HEK293 (cell line): ENCODE measurements at regions of chr1 and their contacts with region 1.

Region 1: GRCh38 chr1:34831721-34832246 is 27.8 kb downstream of the SMIM12 start:
- H3K4me3 ChIP-seq: no peak overlapping the region
- H3K27ac ChIP-seq: no peak overlapping the region
- H3K4me1 ChIP-seq: no peaks in the 10 kb centered on the region
- CTCF ChIP-seq: no peak

Region 2: DNA sequence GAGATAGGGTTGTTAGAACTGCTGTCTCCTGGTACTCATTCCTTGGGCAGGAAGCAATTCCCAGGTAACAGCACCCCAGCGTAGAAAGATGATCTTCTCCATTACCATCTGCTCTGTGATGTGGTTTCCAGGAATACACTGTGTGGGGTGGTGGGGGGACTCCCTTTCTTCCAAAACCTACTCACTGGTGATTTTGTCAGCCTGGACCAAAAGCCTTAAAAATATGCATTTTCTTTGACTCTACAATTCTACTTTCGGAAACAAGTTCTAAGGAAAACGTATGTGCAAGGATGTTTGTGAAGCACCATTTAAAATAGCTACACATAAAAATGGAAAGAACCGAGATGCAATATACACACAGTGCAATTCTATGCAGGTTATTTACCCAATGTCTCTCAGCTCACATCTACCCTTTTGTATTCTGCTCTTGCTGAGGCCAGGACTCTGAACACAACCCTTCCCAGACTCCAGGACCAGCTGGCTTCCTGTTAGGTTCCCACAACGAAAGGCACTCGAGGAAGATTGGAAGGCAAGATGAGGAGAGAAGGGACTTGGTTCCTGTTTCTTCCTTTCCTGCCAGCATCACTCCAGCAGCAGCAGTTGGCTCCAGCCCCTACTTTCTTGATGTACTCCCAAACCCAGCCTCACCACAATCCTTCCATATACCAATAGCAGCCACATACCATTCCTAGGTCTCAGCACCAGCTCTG is 110.0 kb before region 1 on chr1:
- CTCF ChIA-PET with region 1: no interaction called
- POLR2A ChIA-PET with region 1: no interaction called
- H3K4me3 ChIP-seq: no peak overlapping the region
- H3K27ac ChIP-seq: no peak overlapping the region
- H3K4me1 ChIP-seq: no peaks in the 10 kb centered on the region
- CTCF ChIP-seq: no peak

Region 3: DNA sequence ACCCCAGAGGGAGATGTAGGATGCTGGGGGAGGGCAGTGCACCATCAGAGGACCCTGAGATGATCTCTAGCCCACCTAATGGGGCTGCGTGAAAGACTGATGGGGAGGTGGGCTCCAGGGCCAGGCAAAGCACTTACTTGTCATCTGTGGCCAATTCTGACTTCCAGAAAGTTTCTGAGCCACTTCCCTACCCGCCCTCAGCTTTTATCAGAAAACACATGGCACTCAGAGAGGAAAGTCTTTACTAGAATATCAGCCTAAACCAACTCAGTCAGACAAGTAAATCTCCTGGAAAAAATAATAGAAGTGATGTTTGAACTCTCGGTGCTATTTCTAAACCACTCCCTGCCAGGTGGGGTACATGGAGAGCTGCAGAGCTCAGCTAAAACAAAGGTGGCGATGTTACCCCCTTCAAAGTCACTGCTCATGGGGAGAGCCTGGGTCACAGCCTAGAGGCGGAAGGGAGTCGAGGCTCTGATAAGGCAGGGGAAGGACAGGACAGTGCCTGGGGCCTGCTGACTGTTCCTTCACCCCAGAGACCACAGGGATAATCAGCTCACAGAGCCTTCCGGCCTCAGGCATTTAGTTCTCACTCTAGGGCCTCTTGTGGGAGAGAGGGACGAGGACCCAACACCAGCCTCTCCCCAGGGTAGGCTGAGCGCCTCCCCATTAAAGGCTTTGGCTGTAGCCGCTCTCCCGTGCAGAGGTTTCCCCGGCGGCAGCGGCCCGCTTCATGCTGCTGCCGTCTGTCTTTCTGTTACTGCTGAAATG is 13.5 kb after region 1 on chr1:
- CTCF ChIA-PET with region 1: no interaction called
- POLR2A ChIA-PET with region 1: no interaction called
- H3K4me3 ChIP-seq: no peak overlapping the region
- H3K27ac ChIP-seq: no peak overlapping the region
- H3K4me1 ChIP-seq: no peaks in the 10 kb centered on the region
- CTCF ChIP-seq: no peak

Region 4: GRCh38 chr1:34859446-34860200 is 27.8 kb after region 1 on chr1 and contains the start of gene SMIM12:
- CTCF ChIA-PET with region 1: interaction called, 3 read pairs
- POLR2A ChIA-PET with region 1: interaction called, 10 read pairs
- H3K4me3 ChIP-seq: peak within 1 kb of the TSS; percentile 73
- H3K27ac ChIP-seq: peak within 1 kb of the TSS; percentile 24; the same call in 1 of the 2 replicates
- H3K4me1 ChIP-seq: no peaks in the 10 kb centered on the region
- CTCF ChIP-seq: peak; percentile 90

Region 5: DNA sequence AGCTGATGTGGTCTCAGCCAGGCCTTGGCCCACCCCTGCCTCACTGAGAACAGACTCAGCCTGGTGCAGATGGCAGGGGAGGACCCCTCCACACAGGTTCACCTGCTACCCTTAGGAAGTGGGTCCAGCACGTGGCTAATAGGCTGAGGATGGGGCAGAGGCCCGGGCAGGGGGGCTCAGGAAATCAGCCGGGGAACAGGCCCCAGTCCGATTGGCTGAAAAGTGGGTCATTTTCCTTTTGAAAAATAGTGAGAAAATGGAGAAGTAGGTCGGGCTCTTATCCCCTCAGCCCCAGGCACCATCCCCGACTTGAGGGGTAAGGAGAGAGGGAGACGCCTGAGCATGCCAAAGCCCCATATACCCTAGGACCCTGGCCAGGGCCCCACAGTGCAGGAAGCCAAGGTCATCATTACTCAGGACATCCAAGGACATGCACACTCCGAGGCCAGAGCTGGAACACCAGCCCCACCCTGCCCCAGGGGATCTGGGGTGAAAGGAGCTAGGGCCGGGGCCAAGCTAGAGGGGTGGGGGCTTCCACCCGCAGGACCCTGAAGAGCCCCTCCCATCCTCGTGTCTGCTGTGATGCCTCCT is 86.7 kb after region 1 on chr1:
- CTCF ChIA-PET with region 1: no interaction called
- POLR2A ChIA-PET with region 1: no interaction called
- H3K4me3 ChIP-seq: no peak overlapping the region
- H3K27ac ChIP-seq: no peak overlapping the region
- H3K4me1 ChIP-seq: no peaks in the 10 kb centered on the region
- CTCF ChIP-seq: no peak